ENCODE measurements at regions of chrX and their contacts with region 1.

Region 1: DNA sequence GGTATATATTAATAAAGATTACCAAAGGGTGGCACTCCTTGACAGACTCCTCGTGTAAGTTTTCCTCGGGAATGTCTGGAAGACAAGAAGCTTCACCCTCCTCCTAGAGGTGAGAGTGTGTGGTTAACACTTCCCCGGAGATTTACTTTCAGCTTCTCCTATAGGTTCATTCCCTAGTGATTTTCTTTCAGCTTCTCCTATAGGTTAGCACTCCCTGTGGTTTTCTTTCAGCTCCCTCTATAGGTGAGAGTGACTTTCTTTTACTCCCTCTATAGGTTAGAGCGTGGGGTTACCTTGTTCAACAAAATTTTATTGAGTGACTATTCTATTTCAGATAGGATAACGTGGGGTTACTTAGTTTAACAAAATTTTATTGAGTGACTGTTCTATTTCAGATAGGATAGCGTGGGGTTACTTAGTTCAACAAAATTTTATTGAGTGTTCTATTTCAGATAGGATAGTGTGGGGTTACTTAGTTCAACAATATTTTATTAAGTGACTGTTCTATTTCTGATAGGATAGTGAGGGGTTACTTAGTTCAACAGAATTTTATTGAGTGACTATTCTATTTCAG is 106.0 kb upstream of the PLAC1 start:
- DNase-seq: no peak
- H3K4me3 ChIP-seq: no peak overlapping the region
- H3K27ac ChIP-seq: no peak overlapping the region
- H3K4me1 ChIP-seq: no peaks in the 10 kb centered on the region
- H3K27me3 ChIP-seq: no peaks in the 10 kb centered on the region
- CTCF ChIP-seq: no peak

Region 2: DNA sequence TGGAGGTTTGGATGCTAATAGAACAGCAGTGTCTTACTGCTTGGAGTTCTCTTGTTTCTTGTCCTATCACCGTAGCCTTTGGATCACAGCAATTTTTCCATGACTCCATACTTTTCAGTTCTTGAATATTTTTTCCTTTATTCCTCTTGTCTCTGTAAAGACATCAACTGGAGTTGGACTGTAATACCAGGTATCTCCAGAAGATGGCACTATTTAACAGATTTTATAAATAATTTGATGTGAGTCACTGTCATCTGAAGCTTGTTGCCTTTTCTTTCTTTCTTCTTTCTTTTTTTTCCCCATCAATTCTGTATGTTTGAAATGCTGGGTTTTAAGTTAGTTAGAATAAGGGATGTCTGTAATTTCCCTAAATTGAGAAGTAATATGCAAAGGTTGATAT is 280.3 kb before region 1 on chrX:
- intact Hi-C with region 1: loop called (anchors 10 kb)
- DNase-seq: no peak
- H3K4me3 ChIP-seq: no peak overlapping the region
- H3K27ac ChIP-seq: no peak overlapping the region
- H3K4me1 ChIP-seq: no peaks in the 10 kb centered on the region
- H3K27me3 ChIP-seq: no peaks in the 10 kb centered on the region
- CTCF ChIP-seq: peak; percentile 62

Region 3: DNA sequence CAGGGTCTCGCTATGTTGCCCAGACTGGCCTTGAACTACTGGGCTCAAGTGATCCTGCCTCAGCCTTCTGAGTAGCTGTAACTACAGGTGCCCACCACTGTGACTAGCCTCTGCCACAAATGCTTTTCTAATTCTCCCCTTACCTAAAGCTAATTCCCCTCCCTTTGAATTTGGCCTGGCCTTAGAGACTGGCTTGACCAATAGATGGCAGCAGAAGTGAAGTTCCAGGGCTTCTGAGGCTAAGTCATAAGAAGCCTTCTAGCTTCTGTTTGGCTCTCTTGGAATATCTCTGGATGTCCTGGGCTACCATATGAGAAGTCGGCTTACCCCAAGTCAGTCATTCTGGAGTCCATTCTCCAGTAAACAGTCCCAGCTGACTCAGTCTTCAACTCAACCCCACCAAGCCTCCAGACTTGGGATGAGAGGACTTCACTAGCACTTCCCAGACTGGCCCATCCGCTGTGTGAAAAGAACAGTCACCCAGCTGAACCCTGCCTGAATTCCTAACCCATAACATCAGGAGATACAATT is 243.4 kb before region 1 on chrX:
- intact Hi-C with region 1: loop called (anchors 10 kb)
- DNase-seq: peak; percentile 27
- H3K4me3 ChIP-seq: no peak overlapping the region
- H3K27ac ChIP-seq: no peak overlapping the region
- H3K4me1 ChIP-seq: no peaks in the 10 kb centered on the region
- H3K27me3 ChIP-seq: no peaks in the 10 kb centered on the region
- CTCF ChIP-seq: peak; percentile 31

Region 4: DNA sequence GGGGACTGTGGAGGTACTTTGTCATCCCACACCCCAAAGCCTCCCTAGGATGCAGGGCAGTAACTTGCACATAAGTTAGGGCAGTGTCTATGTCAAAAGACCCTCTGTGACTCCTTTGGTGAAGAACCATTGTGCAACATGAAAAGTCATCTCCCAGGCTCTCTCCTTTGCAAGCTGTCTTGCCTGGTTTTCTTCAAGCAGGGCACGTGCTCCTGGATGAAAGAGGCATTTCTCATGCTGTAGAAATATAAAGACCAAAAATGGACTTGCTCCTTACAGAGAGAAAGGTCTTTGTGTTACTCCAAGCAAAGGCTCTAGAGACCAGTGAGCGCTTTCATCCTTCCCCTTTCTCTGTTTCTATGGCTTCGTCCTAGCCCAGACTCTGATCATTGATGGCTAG is 150.9 kb before region 1 on chrX:
- intact Hi-C with region 1: no loop called
- DNase-seq: no peak
- H3K4me3 ChIP-seq: no peak overlapping the region
- H3K27ac ChIP-seq: no peak overlapping the region
- H3K4me1 ChIP-seq: no peaks in the 10 kb centered on the region
- H3K27me3 ChIP-seq: peaks cover 4% of the 10 kb centered on the region
- CTCF ChIP-seq: no peak

Region 5: GRCh38 chrX:134868771-134869495 is 104.6 kb after region 1 on chrX:
- intact Hi-C with region 1: no loop called
- DNase-seq: no peak
- H3K4me3 ChIP-seq: no peak overlapping the region
- H3K27ac ChIP-seq: no peak overlapping the region
- H3K4me1 ChIP-seq: no peaks in the 10 kb centered on the region
- H3K27me3 ChIP-seq: no peaks in the 10 kb centered on the region
- CTCF ChIP-seq: no peak

Measured in colonic mucosa (tissue), 4 donors.